Activated CD8-positive, alpha-beta T cell treated with anti-CD3 and anti-CD28 coated beads, Interleukin-2, amount 10 ng/mL, durations not matched to agents 7 days and 5 days (primary cell): ENCODE measurements at regions of chr4 and their contacts with region 1.

Region 1: GRCh38 chr4:173318648-173319211 is 15.4 kb downstream of the HMGB2 start:
- DNase-seq: no peak
- ATAC-seq: no peak
- H3K4me3 Mint-ChIP-seq: no peak overlapping the region
- H3K27ac Mint-ChIP-seq: no peak overlapping the region
- H3K4me1 Mint-ChIP-seq: no peaks in the 10 kb centered on the region
- H3K27me3 Mint-ChIP-seq: no peaks in the 10 kb centered on the region

Region 2: DNA sequence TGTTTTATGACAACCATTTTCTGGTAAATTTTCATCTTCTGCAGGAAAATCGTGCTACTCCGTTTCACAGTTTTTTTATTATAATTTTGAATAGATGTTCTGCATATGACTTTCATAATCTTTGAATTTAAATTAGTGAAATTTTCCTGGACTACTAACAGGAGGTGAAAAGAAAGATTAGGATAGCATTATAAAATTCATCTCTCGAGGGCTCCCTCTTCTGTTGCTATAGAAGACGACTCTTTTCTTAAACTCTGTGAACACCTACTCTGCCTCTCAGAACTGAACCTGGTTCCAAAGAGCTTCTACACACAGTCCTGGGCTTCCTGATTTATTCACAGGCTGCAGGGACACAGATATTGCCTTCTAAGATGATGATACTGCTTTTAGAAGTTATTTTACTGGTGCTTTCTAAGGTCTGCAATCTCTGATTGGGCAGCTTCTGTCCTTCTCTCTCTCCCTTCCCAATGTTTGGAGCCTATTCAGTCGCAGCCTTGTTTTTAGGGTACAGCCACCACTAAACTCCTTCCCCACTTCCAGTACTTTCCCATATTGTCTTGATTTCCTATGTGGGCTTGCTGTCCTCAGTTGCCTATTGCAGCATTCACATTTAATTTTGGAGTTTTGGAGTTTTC is 42.0 kb after region 1 on chr4:
- CTCF ChIA-PET with region 1: interaction called, 10 read pairs
- POLR2A ChIA-PET with region 1: no interaction called
- DNase-seq: no peak
- ATAC-seq: no peak
- H3K4me3 Mint-ChIP-seq: no peak overlapping the region
- H3K27ac Mint-ChIP-seq: no peak overlapping the region
- H3K4me1 Mint-ChIP-seq: peaks cover 16% of the 10 kb centered on the region
- H3K27me3 Mint-ChIP-seq: peaks cover 3% of the 10 kb centered on the region

Region 3: GRCh38 chr4:173413036-173413435 is 94.3 kb after region 1 on chr4:
- CTCF ChIA-PET with region 1: interaction called, 21 read pairs
- POLR2A ChIA-PET with region 1: no interaction called
- DNase-seq: no peak
- ATAC-seq: no peak
- H3K4me3 Mint-ChIP-seq: no peak overlapping the region
- H3K27ac Mint-ChIP-seq: no peak overlapping the region
- H3K4me1 Mint-ChIP-seq: no peaks in the 10 kb centered on the region
- H3K27me3 Mint-ChIP-seq: peaks cover 3% of the 10 kb centered on the region

Region 4: DNA sequence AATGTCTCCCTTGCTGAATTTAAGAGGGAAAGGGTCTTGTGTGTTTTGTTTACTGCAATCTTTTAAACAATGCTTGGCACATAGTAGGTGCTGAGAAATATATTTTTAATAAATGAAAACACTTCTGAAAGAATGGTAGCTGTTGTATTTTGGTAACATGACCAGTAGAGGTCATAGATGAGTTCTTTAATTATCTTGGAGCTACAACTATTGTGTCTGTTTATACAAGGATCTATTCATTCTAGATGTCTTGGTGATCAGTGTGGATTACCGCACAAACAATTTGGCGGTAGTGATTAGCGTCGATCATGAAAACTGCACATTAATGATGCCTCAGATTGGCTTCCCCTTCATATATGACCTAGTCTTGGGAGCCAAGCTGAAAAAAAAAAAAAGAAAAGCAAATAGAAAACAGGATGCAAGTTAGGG is 101.6 kb after region 1 on chr4:
- CTCF ChIA-PET with region 1: interaction called, 36 read pairs
- POLR2A ChIA-PET with region 1: no interaction called
- DNase-seq: no peak
- ATAC-seq: no peak
- H3K4me3 Mint-ChIP-seq: no peak overlapping the region
- H3K27ac Mint-ChIP-seq: no peak overlapping the region
- H3K4me1 Mint-ChIP-seq: peaks cover 9% of the 10 kb centered on the region
- H3K27me3 Mint-ChIP-seq: peaks cover 9% of the 10 kb centered on the region